ENCODE measurements at regions of chr10 and their contacts with region 1.

Region 1: DNA sequence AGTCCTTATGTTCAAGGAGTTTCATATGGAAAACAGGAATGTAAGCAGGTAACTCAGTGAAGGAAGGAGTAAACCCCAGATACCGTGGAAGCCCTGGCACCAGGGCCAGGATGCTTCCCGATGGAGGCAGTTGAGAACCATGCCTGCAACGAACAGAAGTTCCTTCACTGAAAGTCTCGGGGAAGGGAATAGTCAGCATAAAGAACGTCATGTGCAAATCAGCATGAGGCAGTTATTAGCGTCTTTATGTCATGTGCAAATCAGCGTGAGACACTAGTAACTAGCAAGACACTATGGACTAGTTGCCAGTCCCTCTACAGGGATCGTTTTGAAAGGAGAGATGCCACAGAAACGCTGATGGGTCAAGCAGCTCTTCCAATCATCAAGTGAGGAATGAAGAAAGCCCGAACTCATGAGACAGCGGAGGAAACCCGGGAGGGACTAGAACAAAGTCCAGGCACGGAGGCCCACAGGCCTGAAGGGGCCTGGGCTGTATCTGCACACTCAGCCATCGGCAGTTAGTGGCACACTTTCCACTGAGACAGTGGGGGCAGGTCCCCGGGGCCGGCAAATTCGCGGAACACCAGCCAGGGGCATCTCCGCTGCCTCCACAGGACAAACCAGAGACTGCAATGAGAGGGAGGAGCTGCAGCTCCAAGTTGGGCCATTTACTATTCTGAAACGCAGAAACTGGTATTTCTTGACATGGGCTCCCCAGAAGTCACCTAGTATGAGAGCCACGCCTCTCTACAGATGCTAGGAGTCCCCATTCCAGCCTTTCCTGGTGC is 109.6 kb downstream of the SFMBT2 start:
- DNase-seq: peak; percentile 66 to 78
- ATAC-seq: peak; percentile 92 to 95
- H3K4me3 ChIP-seq: peak overlapping the region; percentile 38
- H3K27ac ChIP-seq: peak overlapping the region; percentile 70 to 84
- H3K4me1 ChIP-seq: peaks cover 47% of the 10 kb centered on the region
- CTCF ChIP-seq: peak; percentile 33
- EP300 ChIP-seq: no peak
- POLR2A ChIP-seq: no peak
- RAD21 ChIP-seq: peak; percentile 13 to 21; a peak in 1 of 5 replicates

Region 2: GRCh38 chr10:7311256-7312178 is 10.3 kb after region 1 on chr10:
- CTCF ChIA-PET with region 1: interaction called, 17 read pairs
- POLR2A ChIA-PET with region 1: interaction called, 6 read pairs
- DNase-seq: peak; percentile 85 to 94
- ATAC-seq: peak; percentile 95 to 96
- H3K4me3 ChIP-seq: 0 out of 3 replicates have a peak overlapping the region, but pooled peaks have one; percentile 8
- H3K27ac ChIP-seq: peak overlapping the region; percentile 82 to 88
- H3K4me1 ChIP-seq: peaks cover 46% of the 10 kb centered on the region
- CTCF ChIP-seq: no peak
- EP300 ChIP-seq: peak; percentile 95 to 98
- POLR2A ChIP-seq: no peak
- RAD21 ChIP-seq: peak; percentile 13 to 45; a peak in 3 of 5 replicates

Region 3: DNA sequence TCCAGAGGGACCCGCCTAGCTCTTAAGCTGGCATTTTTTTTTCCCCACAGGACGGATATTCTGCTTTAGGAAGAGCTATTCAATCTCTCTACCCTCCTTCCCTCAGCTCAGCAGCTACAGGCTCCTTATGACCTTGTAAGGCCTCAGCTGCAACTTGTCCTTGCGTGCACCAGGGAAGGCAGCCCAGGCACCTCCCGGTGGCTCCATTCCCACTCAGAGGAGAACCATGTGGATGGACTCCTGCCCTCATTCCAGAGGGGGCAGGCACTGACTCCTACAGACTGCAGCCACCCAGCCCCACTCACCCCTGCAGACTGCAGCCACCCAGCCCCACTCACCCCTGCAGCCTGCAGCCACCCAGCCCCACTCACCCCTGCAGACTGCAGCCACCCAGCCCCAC is 291.9 kb after region 1 on chr10:
- CTCF ChIA-PET with region 1: no interaction called
- POLR2A ChIA-PET with region 1: no interaction called
- DNase-seq: no peak
- ATAC-seq: peak; percentile 23 to 61; a peak in 3 of 6 replicates
- H3K4me3 ChIP-seq: no peak overlapping the region
- H3K27ac ChIP-seq: no peak overlapping the region
- H3K4me1 ChIP-seq: no peaks in the 10 kb centered on the region
- CTCF ChIP-seq: no peak
- EP300 ChIP-seq: no peak
- POLR2A ChIP-seq: no peak
- RAD21 ChIP-seq: no peak